ENCODE measurements at regions of chr14 and their contacts with region 1.

Region 1: DNA sequence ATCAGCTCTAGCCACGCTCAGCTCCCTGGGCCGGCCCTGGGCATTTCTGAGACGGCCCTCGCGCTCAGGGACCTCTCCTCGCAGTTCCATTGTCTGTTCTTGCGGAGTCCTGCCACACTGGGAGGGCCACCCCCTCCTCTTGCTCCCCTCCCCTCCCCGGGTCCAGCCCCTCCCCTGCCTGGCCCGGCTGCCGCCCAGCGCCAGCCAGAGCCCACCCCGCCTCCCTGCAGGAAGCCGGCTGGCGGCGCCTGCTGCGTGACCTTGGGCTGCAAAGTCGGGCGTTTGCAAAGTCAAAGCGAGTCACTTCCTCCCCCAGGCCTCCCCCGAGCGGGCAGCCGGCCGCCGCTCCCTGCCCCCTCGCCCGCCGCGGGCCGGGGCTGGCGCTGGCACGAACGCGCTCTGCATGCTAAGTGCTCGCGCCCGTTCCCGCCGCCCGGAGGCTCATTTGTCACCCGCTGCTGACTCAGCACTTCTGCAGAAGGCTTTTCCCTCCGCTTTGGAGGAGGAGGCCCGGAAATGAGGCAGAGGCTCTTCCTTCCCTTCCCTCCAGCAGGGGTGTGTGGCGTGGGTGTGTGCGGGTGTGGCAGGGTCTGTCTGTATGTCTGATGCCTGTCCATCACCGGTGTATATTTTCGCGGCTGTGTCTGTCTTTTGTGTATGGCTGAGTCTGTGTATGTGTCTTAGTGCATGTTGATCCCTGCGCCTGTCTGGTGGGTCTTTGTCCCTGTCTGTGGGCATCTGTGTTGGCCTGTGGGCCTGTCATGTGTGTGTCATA is 72.0 kb downstream of the IRF2BPL start:
- DNase-seq: peak; percentile 91 to 94
- H3K4me3 ChIP-seq: peak overlapping the region; percentile 11 to 48 (median 26); a peak in 5 of 8 replicates
- H3K27ac ChIP-seq: peak overlapping the region; percentile 83
- H3K4me1 ChIP-seq: peaks cover 35 to 48% (median 41%) of the 10 kb centered on the region in 4 experiments
- H3K27me3 ChIP-seq: no peaks in the 10 kb centered on the region
- CTCF ChIP-seq: no peak; a peak in 1 of 4 replicates
- EP300 ChIP-seq: peak; percentile 36 to 88
- POLR2A ChIP-seq: peak in 1 of 2 experiments; percentile 25; a peak in 2 of 3 replicates
- RAD21 ChIP-seq: peak in 1 of 2 experiments; percentile 24; a peak in 2 of 4 replicates

Region 2: GRCh38 chr14:76926521-76927251 is 29.8 kb before region 1 on chr14:
- CTCF ChIA-PET with region 1: interaction called, 151 read pairs
- POLR2A ChIA-PET with region 1: interaction called, 28 read pairs
- DNase-seq: no peak
- H3K4me3 ChIP-seq: no peak overlapping the region
- H3K27ac ChIP-seq: no peak overlapping the region
- H3K4me1 ChIP-seq: peaks cover 15 to 48% (median 33%) of the 10 kb centered on the region in 4 experiments
- H3K27me3 ChIP-seq: no peaks in the 10 kb centered on the region
- CTCF ChIP-seq: no peak
- EP300 ChIP-seq: no peak
- POLR2A ChIP-seq: no peak
- RAD21 ChIP-seq: 0 out of 4 replicates have a peak, but pooled peaks of 1 of the 2 experiments have one; percentile 10

Region 3: GRCh38 chr14:76937181-76938091 is 19.1 kb before region 1 on chr14:
- CTCF ChIA-PET with region 1: interaction called, 4 read pairs
- POLR2A ChIA-PET with region 1: interaction called, 29 read pairs
- DNase-seq: no peak
- H3K4me3 ChIP-seq: no peak overlapping the region
- H3K27ac ChIP-seq: peak overlapping the region; percentile 10; the same call in 1 of the 2 replicates
- H3K4me1 ChIP-seq: peaks cover 0 to 29% (median 16%) of the 10 kb centered on the region in 4 experiments; a peak in 6 of 7 replicates
- H3K27me3 ChIP-seq: no peaks in the 10 kb centered on the region
- CTCF ChIP-seq: no peak
- EP300 ChIP-seq: no peak
- POLR2A ChIP-seq: no peak
- RAD21 ChIP-seq: no peak

Region 4: GRCh38 chr14:76968621-76969063 is 12.1 kb after region 1 on chr14:
- CTCF ChIA-PET with region 1: interaction called, 16 read pairs
- POLR2A ChIA-PET with region 1: interaction called, 7 read pairs
- DNase-seq: no peak
- H3K4me3 ChIP-seq: no peak overlapping the region
- H3K27ac ChIP-seq: peak overlapping the region; percentile 56; the same call in 1 of the 2 replicates
- H3K4me1 ChIP-seq: peaks cover 0 to 33% (median 17%) of the 10 kb centered on the region in 4 experiments; a peak in 6 of 7 replicates
- H3K27me3 ChIP-seq: no peaks in the 10 kb centered on the region
- CTCF ChIP-seq: peak in 2 of 3 experiments; percentile 23 to 25; a peak in 2 of 4 replicates
- EP300 ChIP-seq: no peak
- POLR2A ChIP-seq: no peak
- RAD21 ChIP-seq: peak; percentile 26 to 41; a peak in 3 of 4 replicates

Region 5: DNA sequence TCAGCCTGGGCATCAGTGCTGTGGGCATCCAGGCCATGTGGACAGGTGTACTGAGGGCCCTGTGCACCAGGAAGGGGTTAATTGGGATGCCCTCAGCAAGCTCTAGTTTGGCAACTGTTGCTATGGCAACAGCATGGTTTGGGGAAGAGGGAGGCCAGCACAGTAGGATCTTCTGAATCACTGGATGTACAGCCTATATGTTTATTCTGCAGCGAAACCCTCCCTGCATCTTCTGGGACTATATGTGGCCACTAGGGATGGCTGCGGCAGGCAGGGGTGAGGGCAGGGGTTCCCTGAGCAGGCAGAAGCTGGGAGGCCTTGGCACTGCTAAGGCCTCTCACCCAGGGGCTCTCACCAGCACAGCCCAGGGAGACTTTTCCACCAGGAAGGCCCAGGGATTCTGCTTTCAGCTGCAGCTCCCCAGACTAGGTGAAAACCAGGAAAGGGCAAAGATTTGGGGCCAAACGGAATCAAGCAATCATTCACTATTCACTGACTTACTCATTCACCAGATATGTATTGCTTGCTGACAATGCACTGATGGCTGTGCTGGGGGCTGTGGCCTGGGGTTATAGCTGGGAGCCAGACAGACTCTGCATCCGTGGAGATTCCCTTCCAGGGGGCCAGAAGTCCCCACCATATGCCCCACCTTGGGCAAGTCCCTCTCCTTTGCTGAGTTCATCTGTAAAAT is 29.2 kb after region 1 on chr14:
- CTCF ChIA-PET with region 1: interaction called, 14 read pairs
- POLR2A ChIA-PET with region 1: interaction called, 4 read pairs
- DNase-seq: peak in 1 of 2 experiments; percentile 47
- H3K4me3 ChIP-seq: no peak overlapping the region
- H3K27ac ChIP-seq: no peak overlapping the region
- H3K4me1 ChIP-seq: peaks cover 8 to 23% (median 13%) of the 10 kb centered on the region in 4 experiments
- H3K27me3 ChIP-seq: no peaks in the 10 kb centered on the region
- CTCF ChIP-seq: no peak
- EP300 ChIP-seq: no peak
- POLR2A ChIP-seq: no peak
- RAD21 ChIP-seq: no peak

Region 6: DNA sequence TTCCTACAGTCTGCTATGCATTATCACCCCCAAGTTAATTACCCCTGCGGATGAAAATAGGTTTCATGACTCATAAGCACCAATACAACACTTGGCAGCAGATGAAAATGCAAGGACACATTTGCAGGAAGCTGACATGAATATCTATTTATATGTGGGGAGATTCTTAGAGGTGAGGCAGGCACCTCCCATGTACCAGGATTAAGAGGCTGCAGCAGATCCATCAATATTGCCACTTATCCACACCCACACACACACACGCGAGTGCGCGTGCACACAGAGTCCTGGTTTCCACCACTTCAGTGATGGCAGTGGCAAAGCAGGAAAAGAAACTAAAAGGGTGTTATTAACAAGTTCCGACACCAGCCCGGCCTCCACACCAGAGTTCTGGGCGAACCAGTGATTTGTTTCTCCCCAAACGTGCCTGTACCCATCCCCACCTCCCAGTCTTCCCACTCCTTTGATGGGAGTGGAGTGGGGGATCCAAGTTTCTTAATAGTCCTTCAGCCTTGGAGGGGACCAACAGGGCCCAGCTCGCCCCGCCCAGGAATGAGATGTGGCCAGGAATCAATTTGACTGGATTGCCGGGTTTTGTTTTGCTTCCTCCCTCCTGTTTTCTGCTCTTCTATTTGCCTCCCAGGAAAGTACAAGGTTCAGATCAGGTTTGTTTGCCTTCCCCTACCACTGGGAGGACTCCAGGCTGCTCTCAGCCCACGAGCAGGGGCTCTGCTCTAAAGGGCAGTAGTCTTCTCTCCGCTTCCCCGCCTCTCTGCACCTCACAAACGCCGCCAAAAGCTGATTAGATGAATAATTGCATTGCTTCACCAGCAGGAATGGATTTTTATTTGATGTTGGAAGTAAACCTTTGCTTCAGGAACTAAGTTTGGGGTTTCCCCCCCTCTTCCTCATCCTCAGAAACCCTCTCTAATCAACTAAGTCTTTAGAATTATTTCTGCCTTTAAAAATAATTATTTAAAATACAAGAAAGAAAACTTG is 66.8 kb after region 1 on chr14:
- CTCF ChIA-PET with region 1: interaction called, 13 read pairs
- POLR2A ChIA-PET with region 1: interaction called, 71 read pairs
- DNase-seq: peak in 1 of 2 experiments; percentile 51
- H3K4me3 ChIP-seq: peak overlapping the region in 1 of 4 experiments; percentile 86; a peak in 4 of 8 replicates
- H3K27ac ChIP-seq: peak overlapping the region; percentile 35; the same call in 1 of the 2 replicates
- H3K4me1 ChIP-seq: peaks cover 12 to 26% (median 19%) of the 10 kb centered on the region in 4 experiments
- H3K27me3 ChIP-seq: peaks cover 0 to 5% (median 3%) of the 10 kb centered on the region in 4 experiments; a peak in 5 of 7 replicates
- CTCF ChIP-seq: peak in 2 of 3 experiments; percentile 18 to 42; a peak in 3 of 4 replicates
- EP300 ChIP-seq: no peak
- POLR2A ChIP-seq: no peak; a peak in 1 of 3 replicates
- RAD21 ChIP-seq: peak; percentile 47 to 53

Region 7: DNA sequence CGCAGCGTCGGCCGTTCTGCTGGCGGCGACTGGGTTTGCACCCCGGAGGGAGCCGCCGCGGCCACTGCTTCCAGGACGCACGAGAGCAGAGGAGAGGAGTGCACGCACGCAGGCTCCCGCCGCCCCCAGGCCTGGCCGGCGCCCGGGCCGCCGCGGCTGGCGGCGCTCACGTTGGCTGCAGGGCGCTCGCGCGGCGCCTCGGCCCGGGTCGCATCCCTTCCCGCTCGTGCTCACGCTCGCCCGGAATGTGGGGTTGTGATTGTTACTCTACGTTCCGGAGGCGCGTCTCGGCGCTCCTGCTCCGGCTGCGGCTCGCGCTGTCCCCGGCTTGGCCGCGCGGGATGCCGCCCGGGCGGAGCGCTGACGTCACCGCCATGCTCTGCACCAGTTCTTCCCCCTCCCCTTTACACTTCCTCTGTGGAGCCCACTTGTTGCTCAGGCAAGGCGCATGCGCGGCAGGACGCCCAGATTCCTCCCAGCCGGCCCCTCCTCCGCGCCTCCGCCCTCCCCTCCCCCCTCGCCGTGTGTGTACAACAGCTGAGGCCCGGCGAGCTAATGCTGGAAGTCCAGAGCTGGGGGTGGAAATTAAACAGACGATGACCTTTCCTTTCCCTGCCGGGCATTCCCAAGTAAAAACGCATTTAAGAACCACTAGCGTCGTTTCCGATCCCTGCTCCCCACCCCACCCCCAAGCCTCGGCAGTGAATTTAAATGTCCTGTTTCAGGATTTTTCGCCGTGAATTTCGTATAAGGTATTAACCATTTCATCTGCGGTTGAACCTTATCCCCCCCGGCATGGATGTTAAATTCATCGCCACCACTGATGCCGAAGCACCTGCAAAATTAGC is 72.1 kb after region 1 on chr14 and contains the start of gene IRF2BPL:
- CTCF ChIA-PET with region 1: interaction called, 13 read pairs
- POLR2A ChIA-PET with region 1: interaction called, 71 read pairs
- DNase-seq: peak in 1 of 2 experiments; percentile 88
- H3K4me3 ChIP-seq: peak within 1 kb of the TSS; percentile 61 to 86 (median 70)
- H3K27ac ChIP-seq: peak within 1 kb of the TSS; percentile 91
- H3K4me1 ChIP-seq: peaks cover 6 to 40% (median 27%) of the 10 kb centered on the region in 4 experiments
- H3K27me3 ChIP-seq: peaks cover 0 to 5% (median 3%) of the 10 kb centered on the region in 4 experiments; a peak in 5 of 7 replicates
- CTCF ChIP-seq: no peak
- EP300 ChIP-seq: 0 out of 3 replicates have a peak, but pooled peaks of 1 of the 2 experiments have one; percentile 42
- POLR2A ChIP-seq: peak in 1 of 2 experiments; percentile 85; a peak in 2 of 3 replicates
- RAD21 ChIP-seq: peak; percentile 0 to 1; a peak in 2 of 4 replicates
- total RNA-seq, gene IRF2BPL: 57.0 and 59.6 TPM in 2 replicates

Region 8: GRCh38 chr14:77120771-77121743 is 164.6 kb after region 1 on chr14:
- CTCF ChIA-PET with region 1: no interaction called
- POLR2A ChIA-PET with region 1: no interaction called
- DNase-seq: no peak
- H3K4me3 ChIP-seq: no peak overlapping the region
- H3K27ac ChIP-seq: no peak overlapping the region
- H3K4me1 ChIP-seq: peaks cover 20 to 34% (median 22%) of the 10 kb centered on the region in 4 experiments
- H3K27me3 ChIP-seq: peaks cover 0 to 2% (median 0%) of the 10 kb centered on the region in 4 experiments; a peak in 1 of 7 replicates
- CTCF ChIP-seq: no peak
- EP300 ChIP-seq: no peak
- POLR2A ChIP-seq: no peak
- RAD21 ChIP-seq: no peak